ENCODE measurements at regions of chr3 and their contacts with region 1.

Region 1: DNA sequence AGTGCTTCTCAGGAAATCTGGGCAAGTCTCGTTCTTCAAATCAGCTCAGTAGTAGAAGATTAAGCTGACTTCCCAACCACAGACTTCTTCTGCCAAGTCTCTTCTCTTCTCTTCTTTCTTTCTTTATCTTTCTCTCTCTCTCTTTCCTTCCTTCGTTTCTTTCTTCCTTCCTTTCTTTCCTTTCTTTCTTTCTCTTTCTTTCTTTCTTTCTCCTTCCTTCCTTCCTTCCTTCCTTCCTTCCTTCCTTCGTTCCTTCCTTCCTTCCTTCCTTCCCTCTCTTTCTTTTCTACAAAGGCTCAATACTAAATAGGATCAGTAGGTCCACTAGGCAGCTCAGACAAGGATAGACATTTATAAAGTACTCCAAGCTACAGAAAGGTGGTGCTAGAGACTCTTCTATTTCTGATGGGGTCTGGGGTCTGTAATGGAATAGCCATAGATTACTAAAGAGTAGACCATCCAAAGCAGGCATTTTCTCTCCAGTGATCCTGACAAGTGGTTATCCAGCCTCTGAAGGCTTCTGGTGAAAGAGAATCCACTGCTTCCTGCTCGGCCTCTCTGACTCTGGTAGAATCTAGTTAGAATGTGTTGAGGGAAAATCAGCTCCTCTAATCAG is 100.8 kb downstream of the TPRG1 start:
- DNase-seq: no peak
- ATAC-seq: peak; percentile 91
- H3K4me3 Mint-ChIP-seq: no peak overlapping the region
- H3K27ac Mint-ChIP-seq: no peak overlapping the region
- H3K4me1 Mint-ChIP-seq: peaks cover 11% of the 10 kb centered on the region
- H3K27me3 Mint-ChIP-seq: no peaks in the 10 kb centered on the region
- CTCF ChIP-seq: peak; percentile 22; the same call in 1 of the 2 replicates

Region 2: DNA sequence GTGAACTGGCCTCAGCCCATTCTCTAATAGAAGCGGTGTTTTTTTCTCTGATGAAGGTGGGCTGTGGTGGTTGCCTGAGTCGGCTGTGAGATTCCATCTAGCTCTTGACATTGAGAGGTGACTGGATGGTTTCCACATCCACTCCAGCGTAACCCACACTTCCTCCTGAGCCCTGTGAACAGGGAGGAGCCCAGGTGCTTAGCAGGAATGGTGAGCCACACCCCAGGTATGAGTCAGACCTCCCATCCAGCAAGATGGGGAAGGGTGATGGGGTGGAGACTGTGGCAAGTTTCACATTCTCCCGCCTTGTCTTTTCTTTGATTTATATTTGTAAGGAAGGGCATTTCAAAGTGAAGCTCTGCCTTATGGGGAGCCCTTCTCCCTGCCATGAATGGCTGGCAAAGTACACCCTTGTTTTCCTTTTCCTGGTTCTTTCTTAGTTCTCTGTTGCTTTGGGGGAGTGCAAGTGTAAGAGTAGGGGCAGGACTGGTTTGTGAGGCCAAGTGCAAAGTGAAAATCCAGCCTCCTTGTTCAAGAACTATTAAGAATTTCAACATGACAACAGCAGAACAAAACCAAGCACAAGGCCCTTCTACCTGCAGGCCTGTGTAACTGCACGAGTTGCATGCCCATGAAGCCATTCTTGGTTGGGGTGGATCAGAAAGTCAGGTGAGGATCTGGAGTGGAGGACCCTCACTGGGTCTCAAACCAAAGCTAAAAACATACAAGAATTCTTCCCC is 105.4 kb before region 1 on chr3:
- CTCF ChIA-PET with region 1: no interaction called
- POLR2A ChIA-PET with region 1: no interaction called
- DNase-seq: no peak
- ATAC-seq: no peak
- H3K4me3 Mint-ChIP-seq: no peak overlapping the region
- H3K27ac Mint-ChIP-seq: no peak overlapping the region
- H3K4me1 Mint-ChIP-seq: peaks cover 15% of the 10 kb centered on the region
- H3K27me3 Mint-ChIP-seq: no peaks in the 10 kb centered on the region
- CTCF ChIP-seq: no peak

Region 3: DNA sequence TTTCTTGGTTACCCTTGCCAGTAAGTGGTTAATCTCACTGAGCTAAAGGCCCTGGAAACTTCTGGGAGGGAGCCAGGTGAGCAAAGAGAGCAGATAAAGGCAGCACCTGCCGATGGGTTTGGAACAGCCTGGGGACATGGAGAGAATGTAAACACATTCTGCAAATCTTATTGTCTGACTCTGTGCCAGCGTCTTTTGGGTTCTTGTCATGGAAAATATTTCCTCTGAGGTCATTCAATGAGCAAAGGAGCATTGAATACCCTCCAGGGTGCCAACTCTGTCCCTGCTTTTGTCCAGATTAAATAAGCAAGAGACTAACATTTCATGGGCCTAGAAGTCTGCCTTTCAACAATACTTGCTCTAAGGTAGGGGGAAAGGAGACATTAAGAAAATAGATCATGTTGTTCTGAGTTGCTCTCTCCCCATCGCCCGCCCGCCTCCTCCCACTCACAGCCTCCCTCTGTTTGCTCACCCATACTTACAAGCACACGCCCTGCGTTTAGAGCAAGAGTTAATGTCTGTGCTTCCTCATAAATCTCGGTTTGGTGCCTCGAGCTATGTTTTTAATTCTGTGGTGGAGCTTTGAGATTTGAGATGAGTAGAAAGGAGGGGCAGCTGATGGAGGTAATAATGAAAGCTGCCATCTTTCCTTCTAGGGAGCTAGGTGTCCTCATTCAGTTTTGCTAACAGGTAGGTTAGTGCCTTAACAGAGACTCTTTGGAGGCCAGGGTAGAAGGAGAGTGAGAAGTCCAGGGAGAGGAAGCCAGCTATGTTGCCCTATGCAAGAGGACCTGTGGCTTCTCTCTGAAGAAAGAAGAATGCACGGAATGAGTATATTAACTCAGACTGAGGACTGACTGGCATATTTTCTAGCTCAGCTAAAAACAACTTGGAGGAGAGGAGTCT is 32.1 kb after region 1 on chr3:
- CTCF ChIA-PET with region 1: interaction called, 11 read pairs
- POLR2A ChIA-PET with region 1: no interaction called
- DNase-seq: peak; percentile 25
- ATAC-seq: peak; percentile 89
- H3K4me3 Mint-ChIP-seq: no peak overlapping the region
- H3K27ac Mint-ChIP-seq: peak overlapping the region; percentile 66
- H3K4me1 Mint-ChIP-seq: peaks cover 38% of the 10 kb centered on the region
- H3K27me3 Mint-ChIP-seq: no peaks in the 10 kb centered on the region
- CTCF ChIP-seq: no peak

Region 4: GRCh38 chr3:189394599-189395121 is 122.0 kb after region 1 on chr3:
- CTCF ChIA-PET with region 1: no interaction called
- POLR2A ChIA-PET with region 1: no interaction called
- DNase-seq: no peak
- ATAC-seq: no peak
- H3K4me3 Mint-ChIP-seq: no peak overlapping the region
- H3K27ac Mint-ChIP-seq: no peak overlapping the region
- H3K4me1 Mint-ChIP-seq: no peaks in the 10 kb centered on the region
- H3K27me3 Mint-ChIP-seq: no peaks in the 10 kb centered on the region
- CTCF ChIP-seq: no peak

Measured in WTC11 (cell line).